Activated naive CD4-positive, alpha-beta T cell treated with anti-CD3 and anti-CD28 coated beads for 36 hours (primary cell): ENCODE measurements at regions of chr12 and their contacts with region 1.

Region 1: GRCh38 chr12:87995581-87996178 is 33.5 kb downstream of the C12orf50 start:
- DNase-seq: peak; percentile 64
- H3K4me3 Mint-ChIP-seq: no peak overlapping the region
- H3K27ac Mint-ChIP-seq: no peak overlapping the region
- H3K4me1 Mint-ChIP-seq: no peaks in the 10 kb centered on the region
- H3K27me3 Mint-ChIP-seq: peaks cover 11% of the 10 kb centered on the region

Region 2: GRCh38 chr12:87848248-87848868 is 147.3 kb before region 1 on chr12:
- CTCF ChIA-PET with region 1: no interaction called
- intact Hi-C with region 1: loop called (anchors 1 kb)
- DNase-seq: no peak
- H3K4me3 Mint-ChIP-seq: no peak overlapping the region
- H3K27ac Mint-ChIP-seq: no peak overlapping the region
- H3K4me1 Mint-ChIP-seq: no peaks in the 10 kb centered on the region
- H3K27me3 Mint-ChIP-seq: peaks cover 7% of the 10 kb centered on the region

Region 3: GRCh38 chr12:87866578-87867292 is 128.9 kb before region 1 on chr12:
- CTCF ChIA-PET with region 1: no interaction called
- intact Hi-C with region 1: loop called (anchors 5 kb)
- DNase-seq: no peak
- H3K4me3 Mint-ChIP-seq: no peak overlapping the region
- H3K27ac Mint-ChIP-seq: no peak overlapping the region
- H3K4me1 Mint-ChIP-seq: no peaks in the 10 kb centered on the region
- H3K27me3 Mint-ChIP-seq: no peaks in the 10 kb centered on the region

Region 4: GRCh38 chr12:88153959-88154358 is 158.3 kb after region 1 on chr12:
- CTCF ChIA-PET with region 1: no interaction called
- intact Hi-C with region 1: no loop called
- DNase-seq: no peak
- H3K4me3 Mint-ChIP-seq: no peak overlapping the region
- H3K27ac Mint-ChIP-seq: no peak overlapping the region
- H3K4me1 Mint-ChIP-seq: peaks cover 24% of the 10 kb centered on the region
- H3K27me3 Mint-ChIP-seq: no peaks in the 10 kb centered on the region

Region 5: DNA sequence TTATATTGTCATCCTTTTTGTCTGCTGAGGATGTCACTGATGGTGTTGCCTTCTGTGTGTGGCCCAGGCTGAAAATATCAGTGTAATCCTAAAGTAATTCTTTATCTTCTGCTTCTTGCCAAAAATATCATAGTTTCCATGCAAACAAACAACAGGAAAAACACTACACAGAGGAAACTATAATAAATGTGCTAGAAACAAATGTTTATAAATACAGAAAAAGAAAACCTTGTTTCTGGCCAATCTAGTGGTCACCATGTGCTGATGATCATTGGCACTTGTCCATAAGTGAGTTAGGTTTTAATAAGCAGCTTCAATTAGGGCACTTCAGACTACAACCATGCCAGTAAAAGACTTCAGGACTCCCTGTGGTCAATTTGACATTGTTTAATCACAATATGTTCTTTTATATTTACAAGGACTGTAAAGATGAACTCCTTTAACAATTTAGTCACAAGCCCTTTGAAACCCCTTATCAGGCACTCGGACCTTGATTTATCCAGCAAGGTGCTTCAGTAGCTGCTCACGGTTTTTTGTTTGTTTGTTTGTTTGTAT is 271.2 kb after region 1 on chr12:
- CTCF ChIA-PET with region 1: no interaction called
- intact Hi-C with region 1: no loop called
- DNase-seq: no peak
- H3K4me3 Mint-ChIP-seq: no peak overlapping the region
- H3K27ac Mint-ChIP-seq: no peak overlapping the region
- H3K4me1 Mint-ChIP-seq: no peaks in the 10 kb centered on the region
- H3K27me3 Mint-ChIP-seq: no peaks in the 10 kb centered on the region

Region 6: GRCh38 chr12:88591343-88591742 is 595.7 kb after region 1 on chr12:
- CTCF ChIA-PET with region 1: no interaction called
- intact Hi-C with region 1: no loop called
- DNase-seq: no peak
- H3K4me3 Mint-ChIP-seq: no peak overlapping the region
- H3K27ac Mint-ChIP-seq: no peak overlapping the region
- H3K4me1 Mint-ChIP-seq: no peaks in the 10 kb centered on the region
- H3K27me3 Mint-ChIP-seq: no peaks in the 10 kb centered on the region